ENCODE measurements at regions of chr4 and their contacts with region 1.

Region 1: GRCh38 chr4:74117024-74117534 is 18.1 kb upstream of the CXCL2 start:
- DNase-seq: peak in 1 of 2 donors; percentile 76
- ATAC-seq: peak; percentile 94
- H3K4me3 ChIP-seq: no peak overlapping the region
- H3K27ac ChIP-seq: peak overlapping the region; percentile 5 to 30
- H3K4me1 ChIP-seq: peaks cover 7% of the 10 kb centered on the region in 2 donors
- H3K27me3 ChIP-seq: no peaks in the 10 kb centered on the region

Region 2: DNA sequence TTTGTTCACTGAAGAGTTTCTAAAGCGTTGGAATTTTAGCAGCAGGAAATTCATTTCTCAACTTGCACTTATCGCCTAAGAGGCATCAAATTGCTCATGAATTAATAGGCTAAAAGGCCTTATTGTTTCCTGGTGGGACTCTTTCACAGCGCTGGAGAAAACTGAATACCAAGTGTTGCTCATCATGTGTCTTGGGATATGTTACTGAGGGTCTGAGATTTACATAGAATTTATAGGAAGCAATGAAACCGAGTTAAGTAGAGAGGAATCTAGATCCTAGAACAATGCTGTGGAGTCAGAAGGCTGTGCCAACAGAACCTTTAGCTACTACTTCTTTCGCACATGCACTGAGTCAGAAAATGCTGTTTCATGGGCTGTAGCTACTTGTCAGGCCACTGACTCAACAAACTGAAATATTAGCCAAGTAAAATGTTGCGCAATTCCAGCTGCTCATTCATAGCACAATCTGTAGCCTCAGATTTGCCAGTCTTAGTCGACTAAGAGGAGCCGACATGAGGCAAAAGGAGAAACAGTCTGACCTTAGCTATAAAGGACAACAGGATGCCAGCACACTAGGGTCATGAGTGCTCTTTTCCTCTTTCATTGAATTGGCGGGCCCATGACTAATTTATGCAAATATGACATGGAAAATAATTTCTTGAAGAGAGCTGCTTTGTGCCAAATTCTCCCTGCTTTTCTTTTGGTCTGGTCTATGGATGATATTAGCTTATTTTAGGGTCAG is 412.6 kb before region 1 on chr4:
- intact Hi-C with region 1: loop called in 1 of 2 experiments (anchors 10 kb)
- DNase-seq: peak in 1 of 2 donors; percentile 72
- ATAC-seq: peak; percentile 96
- H3K4me3 ChIP-seq: no peak overlapping the region
- H3K27ac ChIP-seq: peak overlapping the region; percentile 23 to 59
- H3K4me1 ChIP-seq: peaks cover 4 to 9% of the 10 kb centered on the region in 2 donors
- H3K27me3 ChIP-seq: no peaks in the 10 kb centered on the region

Region 3: DNA sequence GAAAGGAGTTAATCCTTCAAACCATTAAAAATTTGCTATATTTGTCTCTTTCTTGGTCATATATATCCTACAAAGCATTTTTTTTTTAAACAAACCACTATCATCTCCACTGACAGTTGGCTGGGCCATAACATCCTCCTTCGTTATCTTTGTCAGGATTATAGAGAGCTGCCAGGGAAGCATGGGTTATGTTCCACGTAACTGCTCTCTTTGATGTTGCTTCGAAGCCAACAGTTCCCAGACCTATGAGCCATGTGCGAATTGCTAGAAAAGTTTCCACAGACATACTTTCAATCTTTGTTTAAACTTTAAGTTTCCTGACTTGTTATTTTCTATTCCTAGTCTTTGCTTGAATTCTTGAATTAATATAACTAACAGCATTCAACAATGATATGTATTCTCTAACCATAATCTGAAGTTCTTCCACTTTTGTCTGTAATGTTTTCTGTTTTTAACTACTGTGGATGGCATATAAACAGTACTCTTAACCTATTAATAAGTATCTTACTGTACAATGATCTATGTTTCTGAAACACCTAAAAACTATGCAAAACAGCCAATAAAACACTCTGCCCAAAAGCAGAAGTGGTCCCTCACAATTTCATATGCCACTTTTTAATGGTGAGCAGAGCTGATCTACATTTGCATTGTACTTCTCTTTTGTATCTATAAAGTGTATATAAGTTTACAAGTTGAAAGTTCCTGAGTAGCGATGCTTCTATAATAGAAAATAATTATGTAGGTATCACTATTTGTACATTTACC is 285.8 kb after region 1 on chr4:
- intact Hi-C with region 1: no loop called
- DNase-seq: no peak
- ATAC-seq: no peak
- H3K4me3 ChIP-seq: no peak overlapping the region
- H3K27ac ChIP-seq: no peak overlapping the region
- H3K4me1 ChIP-seq: no peaks in the 10 kb centered on the region
- H3K27me3 ChIP-seq: no peaks in the 10 kb centered on the region